Activated CD4-positive, alpha-beta memory T cell treated with anti-CD3 and anti-CD28 coated beads for 36 hours (primary cell): ENCODE measurements at regions of chr22 and their contacts with region 1.

Region 1: DNA sequence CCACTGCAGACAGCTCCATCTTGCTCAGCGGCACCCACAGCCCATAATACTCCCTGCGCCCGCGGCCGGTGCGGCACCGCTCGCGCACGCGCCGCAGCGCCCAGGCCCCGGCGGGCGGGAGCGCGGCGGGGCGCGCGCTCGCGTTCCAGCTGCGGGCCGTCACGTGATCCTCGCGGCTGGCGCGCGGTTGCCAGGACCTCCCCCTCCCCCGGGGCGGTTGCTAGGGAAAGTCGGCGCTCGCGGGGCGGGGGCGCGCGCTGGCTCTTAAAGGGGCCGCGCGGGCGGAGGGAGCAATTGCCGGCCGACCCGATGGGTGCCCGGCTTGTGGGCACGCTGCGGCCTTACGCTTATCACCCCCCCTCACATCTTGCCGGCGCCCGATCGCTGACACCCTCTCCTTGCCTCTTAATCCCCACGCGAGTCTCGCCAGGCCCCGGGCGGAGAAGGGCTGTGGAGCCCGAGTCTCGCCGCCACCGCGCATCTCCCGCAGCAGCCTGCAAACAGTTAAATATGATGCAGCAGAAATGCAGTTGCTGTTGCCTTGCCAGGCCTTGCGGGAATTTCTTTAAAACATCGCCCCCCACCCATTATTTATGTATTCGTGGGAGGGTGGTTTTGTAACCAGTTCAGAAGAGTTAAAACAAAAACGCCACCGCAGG is at the start of gene CBX6:
- DNase-seq: peak; percentile 96
- H3K4me3 Mint-ChIP-seq: peak within 1 kb of the TSS; percentile 93
- H3K27ac Mint-ChIP-seq: peak within 1 kb of the TSS; percentile 91
- H3K4me1 Mint-ChIP-seq: peaks cover 53% of the 10 kb centered on the region
- H3K27me3 Mint-ChIP-seq: no peaks in the 10 kb centered on the region
- total RNA-seq, gene CBX6: 116 to 117 TPM

Region 2: GRCh38 chr22:38755911-38756532 is 116.3 kb before region 1 on chr22 and contains the start of gene SUN2:
- CTCF ChIA-PET with region 1: interaction called, 7 read pairs
- POLR2A ChIA-PET with region 1: interaction called, 3 read pairs
- intact Hi-C with region 1: loop called (anchors 5 kb)
- DNase-seq: peak; percentile 95
- H3K4me3 Mint-ChIP-seq: peak within 1 kb of the TSS; percentile 88
- H3K27ac Mint-ChIP-seq: peak within 1 kb of the TSS; percentile 93
- H3K4me1 Mint-ChIP-seq: peaks cover 55% of the 10 kb centered on the region
- H3K27me3 Mint-ChIP-seq: no peaks in the 10 kb centered on the region
- total RNA-seq, gene SUN2: 159 to 168 TPM

Region 3: GRCh38 chr22:38853196-38853651 is 19.1 kb before region 1 on chr22:
- CTCF ChIA-PET with region 1: interaction called, 28 read pairs
- POLR2A ChIA-PET with region 1: interaction called, 6 read pairs
- intact Hi-C with region 1: no loop called
- DNase-seq: no peak
- H3K4me3 Mint-ChIP-seq: no peak overlapping the region
- H3K27ac Mint-ChIP-seq: no peak overlapping the region
- H3K4me1 Mint-ChIP-seq: no peaks in the 10 kb centered on the region
- H3K27me3 Mint-ChIP-seq: peaks cover 5% of the 10 kb centered on the region

Region 4: DNA sequence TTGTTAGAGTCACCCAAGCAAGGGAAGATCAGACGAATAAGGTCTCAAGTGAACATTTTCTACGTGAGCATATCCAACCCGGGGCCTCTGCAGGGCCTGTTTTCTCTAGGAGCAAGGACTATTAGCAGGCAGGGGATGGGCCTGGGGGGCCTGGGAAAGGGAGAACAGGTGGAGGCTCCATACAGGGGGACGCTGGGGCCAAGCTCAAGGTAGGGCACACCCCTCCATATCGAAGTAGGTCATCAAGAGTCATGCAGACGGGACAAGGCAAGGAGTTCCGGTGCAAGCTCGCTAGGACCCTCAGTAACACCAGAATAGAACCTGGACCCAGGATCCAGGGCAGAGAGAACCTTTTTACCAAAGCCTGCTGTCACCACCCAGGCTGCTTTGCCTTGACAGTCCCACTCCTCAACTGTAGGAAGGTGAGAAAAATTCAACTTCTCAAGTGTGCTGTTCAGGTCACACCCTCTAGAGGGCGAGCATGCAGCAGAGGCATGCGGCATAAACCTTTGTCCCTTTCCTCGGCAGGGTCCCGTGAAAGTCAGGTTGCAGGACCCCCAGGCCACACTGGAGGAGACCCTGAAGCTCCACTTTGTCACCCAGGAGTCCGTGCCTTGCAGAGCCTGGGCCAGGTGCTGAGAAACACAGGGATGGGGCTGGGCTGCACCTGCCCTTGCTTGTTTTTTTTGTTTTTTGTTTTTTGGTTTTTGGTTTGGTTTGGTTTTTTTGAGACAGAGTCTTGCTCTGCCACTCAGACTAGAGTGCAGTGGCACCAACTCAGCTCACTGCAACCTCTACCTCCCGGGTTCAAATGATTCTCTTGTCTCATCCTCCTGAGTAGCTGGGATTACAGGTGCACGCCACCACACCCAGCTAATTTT is 101.2 kb after region 1 on chr22:
- CTCF ChIA-PET with region 1: interaction called, 28 read pairs
- POLR2A ChIA-PET with region 1: no interaction called
- intact Hi-C with region 1: no loop called
- DNase-seq: peak; percentile 73
- H3K4me3 Mint-ChIP-seq: no peak overlapping the region
- H3K27ac Mint-ChIP-seq: no peak overlapping the region
- H3K4me1 Mint-ChIP-seq: peaks cover 7% of the 10 kb centered on the region
- H3K27me3 Mint-ChIP-seq: peaks cover 7% of the 10 kb centered on the region

Region 5: DNA sequence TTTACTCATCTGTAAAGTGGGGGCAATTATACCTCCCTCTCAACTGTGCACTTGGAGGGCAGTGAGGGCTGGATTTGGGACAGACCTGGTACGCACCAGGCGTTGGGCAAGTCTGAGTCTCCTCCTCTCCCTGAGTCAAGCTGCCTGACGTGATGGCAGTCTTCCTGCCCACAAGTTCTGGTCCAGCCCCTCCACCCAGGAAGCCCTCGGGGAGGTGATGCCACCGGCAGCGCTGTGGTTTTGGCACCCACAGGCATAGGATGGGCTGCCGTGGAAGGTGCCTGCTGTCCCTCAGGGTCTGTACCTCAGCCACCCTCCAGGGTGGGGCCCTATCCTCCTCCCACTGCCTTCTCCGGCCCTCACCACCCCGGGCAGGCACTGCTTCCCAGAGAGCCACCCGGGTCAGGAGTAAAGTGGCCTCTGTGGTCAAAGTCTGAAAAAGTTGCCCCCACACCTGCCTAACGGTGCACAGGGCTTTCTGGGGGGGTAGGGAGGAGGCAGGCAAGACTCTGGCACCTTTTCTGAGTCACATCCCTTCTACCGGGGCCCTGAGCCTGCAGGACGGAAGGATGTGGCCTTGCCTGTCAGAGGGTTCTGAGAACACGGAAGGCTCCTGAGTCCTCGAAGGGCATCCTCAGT is 218.2 kb after region 1 on chr22:
- CTCF ChIA-PET with region 1: no interaction called
- POLR2A ChIA-PET with region 1: no interaction called
- intact Hi-C with region 1: loop called (anchors 5 kb)
- DNase-seq: peak; percentile 95
- H3K4me3 Mint-ChIP-seq: peak overlapping the region; percentile 50
- H3K27ac Mint-ChIP-seq: peak overlapping the region; percentile 96
- H3K4me1 Mint-ChIP-seq: peaks cover 85% of the 10 kb centered on the region
- H3K27me3 Mint-ChIP-seq: no peaks in the 10 kb centered on the region

Region 6: DNA sequence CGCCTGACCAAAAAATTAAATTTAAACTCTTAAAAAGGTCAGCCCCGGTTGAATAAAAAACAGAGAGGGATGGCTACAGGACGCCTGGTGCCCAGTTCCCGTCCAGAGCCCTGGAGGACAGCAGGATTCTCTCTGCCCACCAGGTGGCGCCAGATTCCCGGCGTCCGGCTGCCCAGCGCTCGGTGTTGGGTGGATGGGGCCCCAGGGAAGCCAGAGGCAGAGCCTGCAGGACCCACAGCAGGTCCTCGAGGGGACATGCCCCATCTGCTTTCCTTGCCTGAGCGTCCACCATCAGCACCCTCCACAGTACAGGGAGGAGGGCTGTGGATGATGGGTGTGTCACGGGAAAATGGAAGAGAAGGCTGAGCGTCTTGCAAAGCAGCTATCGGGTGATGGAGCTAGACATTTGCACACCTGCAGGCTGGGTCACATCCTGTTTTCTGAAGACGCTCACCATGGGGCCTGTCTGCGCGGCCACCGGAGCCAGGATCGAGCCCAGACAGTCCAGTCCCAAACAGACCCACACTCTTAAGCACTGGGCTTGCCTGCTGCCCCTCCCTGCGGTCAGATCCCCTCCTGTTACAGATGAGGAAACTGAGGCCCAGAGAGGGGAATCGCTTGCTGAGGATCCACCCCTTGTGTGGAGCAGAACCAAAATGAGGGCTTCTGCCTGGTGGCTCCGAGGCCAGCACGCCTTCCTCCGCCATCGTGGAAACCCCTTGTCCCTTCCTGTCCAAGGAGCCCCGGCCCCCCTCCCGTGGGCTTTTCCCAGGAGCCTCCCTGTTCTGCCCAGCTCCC is 298.7 kb after region 1 on chr22:
- CTCF ChIA-PET with region 1: interaction called, 17 read pairs
- POLR2A ChIA-PET with region 1: no interaction called
- intact Hi-C with region 1: no loop called
- DNase-seq: peak; percentile 91
- H3K4me3 Mint-ChIP-seq: peak overlapping the region; percentile 37
- H3K27ac Mint-ChIP-seq: peak overlapping the region; percentile 43
- H3K4me1 Mint-ChIP-seq: peaks cover 40% of the 10 kb centered on the region
- H3K27me3 Mint-ChIP-seq: peaks cover 1% of the 10 kb centered on the region